Tibial artery (tissue), 4 donors: ENCODE measurements at regions of chr5 and their contacts with region 1.

Region 1: DNA sequence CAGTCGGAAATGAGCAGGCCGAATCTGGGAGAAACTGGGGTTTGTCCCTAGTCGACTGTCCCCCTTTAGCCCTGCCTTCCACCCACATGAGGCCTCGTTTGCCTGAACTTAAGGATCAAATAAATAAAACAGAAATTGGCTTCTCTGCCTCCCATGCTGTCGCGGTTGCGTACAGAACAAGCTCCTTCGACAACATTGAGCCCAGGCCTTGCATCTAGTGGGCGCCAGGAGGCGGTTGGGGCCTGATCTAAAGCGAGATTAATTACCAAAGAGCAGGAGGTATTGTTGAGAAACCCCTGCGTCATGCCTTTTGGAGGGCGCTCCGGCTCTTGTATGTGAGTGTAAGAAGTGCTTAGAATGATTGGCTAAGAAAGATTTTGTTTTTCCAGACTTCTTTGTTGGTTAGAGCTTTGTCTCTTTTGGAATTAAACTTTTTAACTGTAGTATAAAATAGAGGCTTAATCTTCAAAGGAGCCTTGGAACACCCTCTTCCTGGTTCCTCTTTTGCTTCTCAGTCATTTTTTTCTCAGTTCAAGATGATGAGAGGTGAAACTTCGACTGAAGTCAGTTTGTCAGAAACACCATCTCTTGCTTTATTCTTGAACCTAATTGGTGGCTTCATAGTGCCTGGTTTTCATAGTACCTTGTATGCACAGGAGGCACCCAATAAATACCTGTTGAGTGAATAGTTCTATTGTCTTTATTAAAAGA is 827 bp downstream of the ATP6V0E1 start:
- DNase-seq: peak; percentile 89 to 93
- H3K4me3 ChIP-seq: peak overlapping the region; percentile 81 to 97
- H3K27ac ChIP-seq: peak overlapping the region; percentile 94 to 99
- H3K4me1 ChIP-seq: peaks cover 0 to 47% (median 19%) of the 10 kb centered on the region in 4 donors
- H3K27me3 ChIP-seq: no peaks in the 10 kb centered on the region
- CTCF ChIP-seq: peak; percentile 39 to 46

Region 2: DNA sequence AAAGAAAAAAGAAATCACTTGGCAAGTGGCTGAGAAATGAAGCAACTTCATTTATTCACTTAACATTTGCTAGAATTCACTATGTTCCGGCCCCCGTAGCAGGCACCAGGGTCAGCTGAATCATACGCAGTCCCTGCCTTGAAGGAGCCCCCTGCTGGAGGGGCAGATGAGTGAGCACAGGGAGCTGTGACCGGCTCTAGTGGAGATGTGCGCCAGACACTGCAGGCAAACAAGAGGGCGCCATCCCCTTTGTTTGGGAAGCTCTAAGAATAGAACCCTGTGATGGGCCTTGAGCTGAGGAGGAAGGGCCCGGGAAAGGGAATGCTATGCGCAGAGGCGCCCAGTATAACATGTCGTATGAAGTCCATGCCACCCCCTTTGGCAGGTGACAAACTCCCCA is 45.3 kb before region 1 on chr5:
- intact Hi-C with region 1: no loop called
- DNase-seq: no peak
- H3K4me3 ChIP-seq: no peak overlapping the region
- H3K27ac ChIP-seq: no peak overlapping the region
- H3K4me1 ChIP-seq: no peaks in the 10 kb centered on the region
- H3K27me3 ChIP-seq: no peaks in the 10 kb centered on the region
- CTCF ChIP-seq: peak in 1 of 2 experiments; percentile 5

Region 3: GRCh38 chr5:173057062-173057924 is 72.9 kb after region 1 on chr5:
- intact Hi-C with region 1: loop called (anchors 5 kb)
- DNase-seq: peak; percentile 99
- H3K4me3 ChIP-seq: peak overlapping the region; percentile 98 to 99
- H3K27ac ChIP-seq: peak overlapping the region; percentile 98 to 100
- H3K4me1 ChIP-seq: peaks cover 0 to 53% (median 18%) of the 10 kb centered on the region in 4 donors
- H3K27me3 ChIP-seq: no peaks in the 10 kb centered on the region
- CTCF ChIP-seq: peak; percentile 29 to 39

Region 4: GRCh38 chr5:173144200-173145176 is 160.1 kb after region 1 on chr5 and contains the start of gene BNIP1:
- intact Hi-C with region 1: loop called (anchors 2 kb)
- DNase-seq: peak; percentile 89 to 95
- H3K4me3 ChIP-seq: peak within 1 kb of the TSS; percentile 69 to 84
- H3K27ac ChIP-seq: peak within 1 kb of the TSS; percentile 69 to 82
- H3K4me1 ChIP-seq: peaks cover 0 to 10% (median 0%) of the 10 kb centered on the region in 4 donors
- H3K27me3 ChIP-seq: no peaks in the 10 kb centered on the region
- CTCF ChIP-seq: peak; percentile 87 to 89

Region 5: GRCh38 chr5:173283318-173284288 is 299.2 kb after region 1 on chr5:
- intact Hi-C with region 1: loop called (anchors 5 kb)
- DNase-seq: peak; percentile 49 to 70
- H3K4me3 ChIP-seq: peak overlapping the region in 1 of 2 donors; percentile 35
- H3K27ac ChIP-seq: no peak overlapping the region
- H3K4me1 ChIP-seq: peaks cover 0 to 11% (median 9%) of the 10 kb centered on the region in 4 donors
- H3K27me3 ChIP-seq: peaks cover 0 to 55% of the 10 kb centered on the region in 2 donors
- CTCF ChIP-seq: peak; percentile 58 to 60